Activated T-helper 2 cell treated with anti-CD3 and anti-CD28 coated beads, Interferon-gamma antibody, Interleukin-2, Interleukin-4, amounts not matched to agents 10 μg/mL and 5 μg/mL and 100 μg/mL, durations not matched to agents 14 hours and 24 hours and 36 hours (primary cell): ENCODE measurements at regions of chr6 and their contacts with region 1.

Region 1: GRCh38 chr6:73461537-73462350 is at the start of gene MTO1:
- DNase-seq: peak; percentile 78
- H3K4me3 Mint-ChIP-seq: peak within 1 kb of the TSS; percentile 89
- H3K27ac Mint-ChIP-seq: peak within 1 kb of the TSS; percentile 94
- H3K4me1 Mint-ChIP-seq: peaks cover 41% of the 10 kb centered on the region
- H3K27me3 Mint-ChIP-seq: no peaks in the 10 kb centered on the region
- total RNA-seq, gene MTO1: 27.9 and 32.1 TPM in 2 replicates

Region 2: DNA sequence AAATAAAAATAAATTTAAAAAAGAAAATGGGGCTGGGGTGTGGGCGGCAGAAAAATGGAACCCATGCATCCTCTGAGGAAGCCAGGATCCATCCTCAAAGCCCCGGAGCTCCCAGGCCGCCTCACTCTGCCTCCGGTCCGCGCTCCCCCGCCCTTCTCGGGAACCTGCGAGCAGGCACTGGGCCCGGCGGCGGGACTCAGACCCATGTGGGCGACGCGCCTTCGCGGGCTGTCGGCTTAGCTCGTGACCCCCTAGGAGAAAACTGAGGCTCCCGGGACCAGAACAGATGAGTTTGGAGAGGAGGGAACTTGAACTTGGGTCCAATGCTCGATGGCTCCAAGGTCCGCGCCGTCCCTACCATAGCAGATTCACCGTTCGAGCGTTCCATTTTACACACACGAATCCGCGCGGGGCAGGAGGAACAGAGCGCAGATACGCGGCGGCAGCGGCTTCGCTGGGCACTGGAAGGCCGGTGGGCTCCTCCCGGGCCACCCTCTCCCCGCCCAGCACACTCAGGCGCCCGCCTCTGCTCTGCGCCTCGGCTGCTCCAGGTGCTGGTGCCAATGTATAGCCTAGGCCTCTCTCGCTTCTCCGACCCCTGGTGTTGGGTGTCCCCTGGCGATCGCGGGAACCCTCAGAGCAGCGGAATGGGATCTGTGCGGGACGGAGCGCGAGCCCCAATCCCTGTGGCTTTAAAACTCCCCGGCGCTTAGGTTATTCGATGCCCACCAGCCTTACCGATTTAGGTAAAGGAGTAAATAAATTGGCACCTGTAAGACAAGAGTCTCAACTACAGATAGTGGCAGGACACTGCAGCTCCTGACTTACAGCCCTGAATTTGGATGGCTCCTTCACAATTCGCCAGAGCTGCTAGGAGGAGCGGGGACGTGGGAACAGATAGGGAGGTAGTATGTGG is 146.9 kb before region 1 on chr6:
- intact Hi-C with region 1: no loop called
- DNase-seq: no peak
- H3K4me3 Mint-ChIP-seq: no peak overlapping the region
- H3K27ac Mint-ChIP-seq: no peak overlapping the region
- H3K4me1 Mint-ChIP-seq: peaks cover 10% of the 10 kb centered on the region
- H3K27me3 Mint-ChIP-seq: peaks cover 66% of the 10 kb centered on the region

Region 3: GRCh38 chr6:73451223-73452107 is 10.3 kb before region 1 on chr6:
- intact Hi-C with region 1: loop called (anchors 1 kb)
- DNase-seq: peak; percentile 37
- H3K4me3 Mint-ChIP-seq: peak overlapping the region; percentile 87
- H3K27ac Mint-ChIP-seq: peak overlapping the region; percentile 82
- H3K4me1 Mint-ChIP-seq: peaks cover 25% of the 10 kb centered on the region
- H3K27me3 Mint-ChIP-seq: no peaks in the 10 kb centered on the region

Region 4: DNA sequence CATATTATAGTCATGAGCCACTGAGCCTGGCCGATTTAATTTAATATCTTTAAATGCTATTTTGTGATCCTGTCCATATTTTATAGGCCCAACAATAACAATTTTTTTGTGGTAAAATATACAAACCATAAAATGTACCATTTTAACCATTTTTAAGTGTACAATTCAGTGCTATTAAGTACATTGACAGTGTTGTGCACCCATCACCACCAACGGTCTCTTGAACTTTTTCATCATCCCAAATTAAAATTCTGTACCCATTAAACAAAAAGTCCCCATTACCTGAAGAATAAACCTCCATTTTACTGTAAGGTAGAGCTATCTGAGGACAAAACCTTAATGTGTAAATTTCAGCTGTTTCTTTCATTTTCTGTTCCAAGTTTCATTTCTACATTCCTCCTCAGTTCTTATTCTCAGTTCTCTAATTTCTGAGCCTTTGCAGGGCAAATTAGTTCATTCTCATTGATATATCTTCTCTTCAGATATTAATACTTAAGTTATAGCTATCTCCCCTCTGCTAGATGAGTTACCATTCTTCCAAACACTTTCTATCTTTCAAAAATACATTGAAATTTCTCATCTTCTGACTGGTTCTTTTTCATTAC is 10.0 kb after region 1 on chr6:
- intact Hi-C with region 1: loop called (anchors 1 kb)
- DNase-seq: no peak
- H3K4me3 Mint-ChIP-seq: peak overlapping the region; percentile 24
- H3K27ac Mint-ChIP-seq: peak overlapping the region; percentile 78
- H3K4me1 Mint-ChIP-seq: peaks cover 17% of the 10 kb centered on the region
- H3K27me3 Mint-ChIP-seq: no peaks in the 10 kb centered on the region

Region 5: DNA sequence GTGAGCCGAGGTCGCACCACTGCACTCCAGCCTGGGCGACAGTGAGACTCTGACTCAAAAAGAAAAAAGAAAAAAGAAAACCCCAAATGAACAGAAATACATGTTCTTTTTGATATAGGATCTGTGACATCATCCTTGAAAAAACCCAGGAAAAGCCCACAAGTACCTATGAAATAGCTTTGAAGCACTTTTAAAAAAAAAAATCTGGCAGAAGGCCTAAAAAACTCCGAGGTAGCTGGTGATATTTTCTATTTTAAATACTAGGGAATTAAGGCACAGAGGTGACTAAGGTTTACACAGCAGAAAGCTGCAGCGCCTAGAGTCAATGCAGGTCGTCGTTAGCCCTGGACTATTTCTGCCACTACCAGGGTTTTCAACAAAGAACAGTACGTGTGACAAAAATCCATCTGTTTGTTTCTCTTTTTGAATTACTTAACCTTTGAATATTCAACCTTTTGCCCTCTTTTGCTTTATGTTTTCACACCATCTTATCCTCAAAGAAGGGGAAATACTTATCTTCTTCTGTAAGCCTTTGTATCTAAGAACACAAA is 98.5 kb after region 1 on chr6:
- intact Hi-C with region 1: no loop called
- DNase-seq: no peak
- H3K4me3 Mint-ChIP-seq: no peak overlapping the region
- H3K27ac Mint-ChIP-seq: no peak overlapping the region
- H3K4me1 Mint-ChIP-seq: peaks cover 6% of the 10 kb centered on the region
- H3K27me3 Mint-ChIP-seq: no peaks in the 10 kb centered on the region